ENCODE measurements at regions of chr20 and their contacts with region 1.

Region 1: GRCh38 chr20:57124800-57125399 is 141.5 kb downstream of the BMP7 start:
- DNase-seq: no peak
- ATAC-seq: no peak
- H3K4me3 ChIP-seq: no peak overlapping the region
- H3K27ac ChIP-seq: no peak overlapping the region
- H3K4me1 ChIP-seq: no peaks in the 10 kb centered on the region
- H3K27me3 ChIP-seq: peaks cover 0 to 2% (median 0%) of the 10 kb centered on the region in 3 donors
- CTCF ChIP-seq: no peak

Region 2: DNA sequence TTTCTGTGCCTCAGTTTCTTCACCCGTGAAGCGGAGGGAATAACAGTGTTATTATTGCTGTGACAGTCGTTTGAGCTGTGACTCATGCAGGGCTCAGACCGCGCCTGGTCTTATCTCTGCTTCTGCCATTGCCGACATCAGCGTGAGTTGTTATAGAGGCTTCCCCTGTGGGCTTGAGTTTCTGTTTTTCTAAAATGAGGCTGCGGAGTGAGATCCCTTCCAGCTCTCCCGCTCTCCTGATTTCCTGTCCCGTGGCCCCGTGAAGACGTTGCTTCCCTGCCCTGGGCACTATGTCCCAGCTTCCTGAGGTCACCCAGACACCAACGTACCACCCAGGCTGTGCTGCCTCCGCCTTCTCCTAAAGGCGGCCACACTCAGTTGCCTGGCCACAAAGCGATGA is 136.9 kb before region 1 on chr20:
- intact Hi-C with region 1: no loop called
- DNase-seq: no peak
- ATAC-seq: no peak
- H3K4me3 ChIP-seq: no peak overlapping the region
- H3K27ac ChIP-seq: no peak overlapping the region
- H3K4me1 ChIP-seq: no peaks in the 10 kb centered on the region
- H3K27me3 ChIP-seq: peaks cover 0 to 5% (median 0%) of the 10 kb centered on the region in 3 donors
- CTCF ChIP-seq: no peak

Region 3: DNA sequence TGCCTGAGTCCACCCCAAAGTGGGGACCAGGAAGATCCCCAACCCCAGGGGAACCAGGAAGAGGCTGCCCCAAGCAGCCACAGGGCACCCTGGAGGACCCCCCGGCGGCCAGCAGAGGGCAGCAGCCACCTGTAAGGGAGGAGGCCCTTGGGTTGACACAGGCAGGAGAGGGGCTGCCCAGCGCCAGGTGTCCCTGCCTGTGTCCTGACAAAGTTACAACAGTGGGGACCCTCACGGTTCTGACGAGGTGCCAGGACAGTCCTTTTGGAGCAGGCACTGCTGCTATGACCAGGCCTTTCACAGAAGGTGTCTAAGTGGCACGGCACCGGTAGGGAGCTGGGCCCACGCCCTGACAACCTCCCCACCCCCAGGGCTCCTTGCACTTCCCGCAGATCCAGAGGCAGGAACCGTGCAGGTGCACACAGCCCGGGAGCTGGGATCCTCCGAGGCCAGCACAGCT is 35.2 kb before region 1 on chr20:
- intact Hi-C with region 1: no loop called
- DNase-seq: peak; percentile 64 to 71
- ATAC-seq: peak in 3 of 4 donors; percentile 48 to 72 (median 63)
- H3K4me3 ChIP-seq: no peak overlapping the region
- H3K27ac ChIP-seq: no peak overlapping the region
- H3K4me1 ChIP-seq: no peaks in the 10 kb centered on the region
- H3K27me3 ChIP-seq: peaks cover 0 to 21% (median 2%) of the 10 kb centered on the region in 3 donors
- CTCF ChIP-seq: peak; percentile 62

Region 4: DNA sequence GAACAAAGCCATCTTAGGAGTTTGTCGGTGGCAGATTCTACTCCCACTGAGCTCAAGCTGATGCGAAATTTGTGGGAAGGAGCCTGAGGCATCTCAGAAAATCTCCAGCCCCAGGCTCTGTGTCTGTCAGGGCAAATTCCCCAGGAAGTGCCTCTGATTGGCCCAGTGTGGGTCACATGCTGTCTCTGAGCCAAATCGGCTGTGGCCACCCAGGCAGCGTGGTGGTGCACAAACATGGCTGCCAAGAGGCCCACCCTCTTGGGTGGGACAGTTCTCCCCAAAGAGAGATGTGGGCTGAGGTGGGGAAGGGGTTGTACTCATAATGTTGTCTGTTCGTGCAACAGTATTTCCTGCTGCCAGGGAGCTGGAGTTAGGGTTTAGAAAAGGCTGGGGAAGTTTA is 11.0 kb after region 1 on chr20:
- intact Hi-C with region 1: no loop called
- DNase-seq: no peak
- ATAC-seq: no peak
- H3K4me3 ChIP-seq: no peak overlapping the region
- H3K27ac ChIP-seq: no peak overlapping the region
- H3K4me1 ChIP-seq: no peaks in the 10 kb centered on the region
- H3K27me3 ChIP-seq: peaks cover 0 to 4% (median 2%) of the 10 kb centered on the region in 3 donors
- CTCF ChIP-seq: no peak

Region 5: DNA sequence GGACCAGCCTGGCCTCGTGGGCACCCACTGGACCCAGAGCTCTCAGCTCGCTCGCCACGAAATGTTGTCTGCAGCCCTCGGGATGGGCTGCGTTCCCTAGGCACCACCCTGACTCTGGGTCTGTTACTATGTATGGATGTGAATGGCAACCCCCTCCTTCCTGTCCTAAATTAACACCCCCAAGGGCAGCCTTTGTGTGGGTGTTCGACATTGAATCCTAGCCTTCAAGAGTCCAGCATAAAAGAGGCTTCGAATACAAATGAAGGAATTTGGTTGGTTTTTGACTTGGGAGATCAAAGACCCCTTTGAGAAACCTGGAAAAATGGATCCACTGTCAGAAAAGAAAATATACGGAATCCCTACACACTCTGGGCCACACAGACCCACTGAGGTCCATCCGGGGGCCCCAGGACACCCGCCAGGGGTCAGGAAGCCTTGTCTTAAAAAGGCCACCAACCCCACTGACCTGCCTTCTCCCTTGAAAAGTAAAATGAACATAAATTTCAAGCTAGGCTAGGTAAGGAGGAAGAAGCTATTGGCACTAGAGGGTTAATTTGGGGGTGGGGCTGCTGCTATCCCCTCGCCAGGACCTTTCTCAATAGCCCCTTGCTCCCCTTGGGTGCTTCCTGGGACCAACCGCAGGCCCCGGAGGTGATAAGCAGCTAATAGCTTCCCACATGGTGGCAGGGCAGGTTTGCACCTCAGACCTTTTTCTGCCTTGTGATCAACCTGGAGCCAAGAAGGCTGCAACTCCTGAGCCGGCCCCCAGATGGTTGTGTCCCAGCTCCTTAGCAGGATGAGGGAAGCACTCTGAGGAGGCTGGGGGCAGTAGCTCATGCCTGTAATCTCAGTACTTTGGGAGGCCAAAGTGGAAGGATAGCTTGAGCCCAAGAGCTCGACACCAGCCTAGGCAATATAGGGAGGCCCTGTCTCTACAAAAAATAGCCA is 55.8 kb after region 1 on chr20:
- intact Hi-C with region 1: loop called in 1 of 2 experiments (anchors 10 kb)
- DNase-seq: peak in 1 of 2 donors; percentile 17
- ATAC-seq: no peak
- H3K4me3 ChIP-seq: no peak overlapping the region
- H3K27ac ChIP-seq: no peak overlapping the region
- H3K4me1 ChIP-seq: no peaks in the 10 kb centered on the region
- H3K27me3 ChIP-seq: peaks cover 0 to 5% (median 5%) of the 10 kb centered on the region in 3 donors
- CTCF ChIP-seq: no peak